Left cardiac atrium (tissue), 4 donors: ENCODE measurements at regions of chr2 and their contacts with region 1.

Region 1: DNA sequence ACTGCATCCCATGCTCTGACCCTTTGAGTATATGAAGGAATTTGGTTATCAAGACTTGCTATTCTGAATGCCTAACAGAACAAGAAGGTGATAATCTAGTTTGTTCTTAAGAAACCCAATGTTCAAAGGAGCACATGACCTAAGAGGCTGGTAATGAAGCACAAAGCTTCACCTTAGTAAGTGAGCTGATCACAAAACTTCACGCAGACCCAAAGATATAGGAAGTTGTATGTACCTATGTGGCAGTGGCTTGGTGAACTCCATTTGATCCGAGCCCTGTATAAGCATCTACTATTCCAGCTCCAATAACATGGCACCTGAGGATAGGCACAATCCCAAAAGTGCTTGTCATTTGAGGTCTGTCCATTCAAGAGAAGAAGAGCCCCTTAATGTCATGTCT is 78.6 kb downstream of the ANKRD44 start:
- DNase-seq: no peak
- ATAC-seq: no peak

Region 2: DNA sequence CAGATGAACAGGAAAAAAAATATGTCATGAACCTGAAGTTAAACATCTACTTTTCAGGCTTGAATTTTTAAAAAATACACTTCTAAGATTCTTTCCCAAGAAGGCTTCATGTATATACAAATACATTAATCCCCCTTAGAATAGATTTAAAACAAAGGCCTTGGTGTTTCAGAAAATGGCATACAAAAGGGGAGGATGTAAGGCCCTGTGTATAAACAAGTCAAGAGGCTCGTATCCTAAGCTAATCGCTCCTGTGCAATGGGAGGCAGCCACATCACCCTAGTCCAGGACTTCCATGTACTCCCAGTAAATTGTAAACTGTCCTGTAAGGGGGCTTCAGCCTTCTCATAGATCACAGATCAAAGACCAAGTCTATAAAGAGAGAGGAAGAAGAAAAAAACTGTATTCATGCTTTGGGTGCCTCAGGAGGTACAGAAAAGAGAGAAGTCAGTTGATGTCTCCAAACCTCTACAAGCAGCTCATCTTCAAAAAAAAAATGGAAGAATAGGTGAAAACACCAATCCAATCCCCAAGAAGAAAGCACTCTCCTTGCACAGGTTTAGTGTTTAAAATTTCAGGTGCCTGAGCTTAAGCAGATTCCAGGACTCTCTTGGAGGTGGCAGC is 24.6 kb after region 1 on chr2:
- intact Hi-C with region 1: loop called in 1 of 2 experiments (anchors 1 kb)
- DNase-seq: no peak
- ATAC-seq: no peak